ENCODE measurements at regions of chr1 and their contacts with region 1.

Region 1: GRCh38 chr1:32377541-32378220 is 15.3 kb downstream of the TSSK3 start:
- H3K4me3 ChIP-seq: no peak overlapping the region
- H3K27ac ChIP-seq: no peak overlapping the region
- H3K4me1 ChIP-seq: no peaks in the 10 kb centered on the region
- CTCF ChIP-seq: no peak

Region 2: GRCh38 chr1:32358435-32358834 is 19.2 kb before region 1 on chr1:
- CTCF ChIA-PET with region 1: no interaction called
- POLR2A ChIA-PET with region 1: no interaction called
- H3K4me3 ChIP-seq: no peak overlapping the region
- H3K27ac ChIP-seq: no peak overlapping the region
- H3K4me1 ChIP-seq: no peaks in the 10 kb centered on the region
- CTCF ChIP-seq: no peak

Region 3: GRCh38 chr1:32394141-32394889 is 16.6 kb after region 1 on chr1 and contains the start of gene BSDC1:
- CTCF ChIA-PET with region 1: interaction called, 4 read pairs
- POLR2A ChIA-PET with region 1: interaction called, 10 read pairs
- H3K4me3 ChIP-seq: peak within 1 kb of the TSS; percentile 92
- H3K27ac ChIP-seq: peak within 1 kb of the TSS; percentile 64
- H3K4me1 ChIP-seq: peaks cover 6% of the 10 kb centered on the region; the same call in 1 of the 2 replicates
- CTCF ChIP-seq: no peak

Measured in HEK293 (cell line).